ENCODE measurements at regions of chr2 and their contacts with region 1.

Region 1: DNA sequence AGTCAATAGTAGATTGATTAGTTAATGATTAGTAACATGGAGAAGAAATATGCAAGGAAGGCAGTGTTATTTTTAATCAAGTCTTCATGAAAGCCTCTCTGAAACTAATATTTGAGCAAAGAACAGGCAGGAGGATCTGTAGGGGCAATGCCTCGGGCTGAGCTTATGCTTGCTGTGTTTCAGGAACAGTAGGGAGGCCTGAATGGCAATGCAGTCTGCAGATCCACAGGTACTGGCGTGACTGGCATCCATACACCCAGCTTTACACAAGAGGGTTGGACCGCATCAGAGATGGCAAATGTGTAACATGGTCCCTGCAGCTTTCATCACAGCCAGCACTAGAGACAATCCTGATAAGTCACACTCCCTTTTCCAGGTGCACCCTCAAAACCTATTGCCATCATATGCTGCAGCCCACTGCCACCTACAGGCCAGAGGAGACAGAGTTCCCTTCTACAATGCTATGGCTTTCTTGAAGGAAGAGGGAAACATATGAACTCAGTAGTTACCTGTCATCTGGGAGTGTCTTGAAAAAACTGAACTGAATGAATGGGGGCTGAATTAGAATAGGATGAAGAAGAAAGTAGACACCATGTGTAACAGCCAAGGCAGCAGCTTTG is 582.4 kb upstream of the RAB6C start:
- DNase-seq: peak; percentile 28
- ATAC-seq: no peak
- H3K4me3 Mint-ChIP-seq: no peak overlapping the region
- H3K27ac Mint-ChIP-seq: no peak overlapping the region
- H3K4me1 Mint-ChIP-seq: no peaks in the 10 kb centered on the region
- H3K27me3 Mint-ChIP-seq: no peaks in the 10 kb centered on the region

Region 2: GRCh38 chr2:128178650-128179460 is 1218.2 kb before region 1 on chr2:
- CTCF ChIA-PET with region 1: no interaction called
- POLR2A ChIA-PET with region 1: no interaction called
- intact Hi-C with region 1: loop called in 1 of 2 experiments (anchors 5 kb)
- DNase-seq: peak; percentile 77
- ATAC-seq: peak; percentile 92
- H3K4me3 Mint-ChIP-seq: no peak overlapping the region
- H3K27ac Mint-ChIP-seq: no peak overlapping the region
- H3K4me1 Mint-ChIP-seq: peaks cover 2% of the 10 kb centered on the region
- H3K27me3 Mint-ChIP-seq: no peaks in the 10 kb centered on the region

Region 3: GRCh38 chr2:128736689-128737545 is 660.2 kb before region 1 on chr2:
- CTCF ChIA-PET with region 1: no interaction called
- POLR2A ChIA-PET with region 1: no interaction called
- intact Hi-C with region 1: loop called (anchors 1 to 5 kb)
- DNase-seq: peak; percentile 84
- ATAC-seq: peak; percentile 55
- H3K4me3 Mint-ChIP-seq: peak overlapping the region; percentile 47
- H3K27ac Mint-ChIP-seq: no peak overlapping the region
- H3K4me1 Mint-ChIP-seq: peaks cover 6% of the 10 kb centered on the region
- H3K27me3 Mint-ChIP-seq: peaks cover 9% of the 10 kb centered on the region

Measured in activated CD4-positive, alpha-beta T cell treated with anti-CD3 and anti-CD28 coated beads for 36 hours (primary cell).